ENCODE measurements at regions of chr12 and their contacts with region 1.

Region 1: GRCh38 chr12:12611512-12612306 is at the start of gene CREBL2:
- DNase-seq: peak; percentile 88 to 89 (median 88)
- H3K4me3 ChIP-seq: peak within 1 kb of the TSS; percentile 92 to 97
- H3K4me3 Mint-ChIP-seq: peak within 1 kb of the TSS; percentile 92 to 99 (median 95)
- H3K27ac ChIP-seq: peak within 1 kb of the TSS; percentile 77
- H3K27ac Mint-ChIP-seq: peak within 1 kb of the TSS; percentile 93 to 99 (median 99)
- H3K4me1 ChIP-seq: peaks cover 66% of the 10 kb centered on the region
- H3K4me1 Mint-ChIP-seq: peaks cover 34 to 73% (median 54%) of the 10 kb centered on the region in 4 donors
- H3K27me3 ChIP-seq: no peaks in the 10 kb centered on the region
- H3K27me3 Mint-ChIP-seq: no peaks in the 10 kb centered on the region
- total RNA-seq, gene CREBL2: 51.0 to 52.0 TPM

Region 2: GRCh38 chr12:12630850-12631249 is 19.1 kb after region 1 on chr12:
- CTCF ChIA-PET with region 1: interaction called, 7 read pairs
- POLR2A ChIA-PET with region 1: interaction called, 16 read pairs
- intact Hi-C with region 1: no loop called
- DNase-seq: no peak
- H3K4me3 ChIP-seq: no peak overlapping the region
- H3K4me3 Mint-ChIP-seq: peak overlapping the region in 7 of 8 donors; percentile 29 to 75 (median 55)
- H3K27ac ChIP-seq: no peak overlapping the region
- H3K27ac Mint-ChIP-seq: peak overlapping the region in 6 of 7 donors; percentile 7 to 86 (median 52)
- H3K4me1 ChIP-seq: peaks cover 56% of the 10 kb centered on the region
- H3K4me1 Mint-ChIP-seq: peaks cover 43 to 72% (median 61%) of the 10 kb centered on the region in 4 donors
- H3K27me3 ChIP-seq: no peaks in the 10 kb centered on the region
- H3K27me3 Mint-ChIP-seq: no peaks in the 10 kb centered on the region

Region 3: DNA sequence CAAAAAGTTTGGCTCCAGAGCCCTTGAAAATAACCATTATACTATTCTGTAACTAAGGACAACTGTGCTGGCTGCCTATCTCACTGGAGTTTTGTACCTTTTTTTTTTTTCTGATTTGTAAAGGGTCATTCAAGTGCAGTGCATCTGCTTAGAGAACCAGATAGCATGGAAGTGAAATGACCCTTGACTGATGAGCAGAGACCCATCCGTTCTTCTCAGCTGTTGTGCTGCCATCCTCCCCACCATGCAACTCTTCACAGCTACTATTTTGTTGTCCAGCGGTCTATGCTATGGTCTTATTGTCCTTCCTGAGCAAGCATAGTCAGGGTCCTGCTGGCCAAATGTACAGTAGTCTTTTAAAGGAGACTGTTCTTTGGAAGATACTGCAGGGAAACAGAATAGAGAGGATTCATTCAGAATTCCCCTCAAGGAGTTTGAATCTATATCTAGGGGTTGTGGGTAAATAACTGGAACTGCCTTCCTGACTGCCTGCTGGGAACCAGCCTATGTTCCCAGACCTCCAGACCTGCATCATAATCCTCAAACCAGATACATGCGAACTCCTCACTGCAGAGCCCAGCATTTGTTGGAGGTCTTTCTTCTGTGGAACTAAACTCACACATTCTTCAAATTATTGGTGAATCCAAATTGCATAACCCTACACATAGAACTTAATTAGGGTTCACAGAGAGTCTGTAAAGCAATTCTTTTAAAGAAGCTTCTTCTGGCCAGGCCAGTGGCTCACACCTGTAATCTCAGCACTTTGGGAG is 43.2 kb after region 1 on chr12:
- CTCF ChIA-PET with region 1: interaction called, 10 read pairs
- POLR2A ChIA-PET with region 1: interaction called, 6 read pairs
- intact Hi-C with region 1: loop called (anchors 1 kb)
- DNase-seq: no peak
- H3K4me3 ChIP-seq: no peak overlapping the region
- H3K4me3 Mint-ChIP-seq: no peak overlapping the region
- H3K27ac ChIP-seq: no peak overlapping the region
- H3K27ac Mint-ChIP-seq: peak overlapping the region in 2 of 7 donors; percentile 70 to 79
- H3K4me1 ChIP-seq: peaks cover 13% of the 10 kb centered on the region
- H3K4me1 Mint-ChIP-seq: peaks cover 13 to 19% (median 14%) of the 10 kb centered on the region in 4 donors
- H3K27me3 ChIP-seq: no peaks in the 10 kb centered on the region
- H3K27me3 Mint-ChIP-seq: no peaks in the 10 kb centered on the region

Region 4: DNA sequence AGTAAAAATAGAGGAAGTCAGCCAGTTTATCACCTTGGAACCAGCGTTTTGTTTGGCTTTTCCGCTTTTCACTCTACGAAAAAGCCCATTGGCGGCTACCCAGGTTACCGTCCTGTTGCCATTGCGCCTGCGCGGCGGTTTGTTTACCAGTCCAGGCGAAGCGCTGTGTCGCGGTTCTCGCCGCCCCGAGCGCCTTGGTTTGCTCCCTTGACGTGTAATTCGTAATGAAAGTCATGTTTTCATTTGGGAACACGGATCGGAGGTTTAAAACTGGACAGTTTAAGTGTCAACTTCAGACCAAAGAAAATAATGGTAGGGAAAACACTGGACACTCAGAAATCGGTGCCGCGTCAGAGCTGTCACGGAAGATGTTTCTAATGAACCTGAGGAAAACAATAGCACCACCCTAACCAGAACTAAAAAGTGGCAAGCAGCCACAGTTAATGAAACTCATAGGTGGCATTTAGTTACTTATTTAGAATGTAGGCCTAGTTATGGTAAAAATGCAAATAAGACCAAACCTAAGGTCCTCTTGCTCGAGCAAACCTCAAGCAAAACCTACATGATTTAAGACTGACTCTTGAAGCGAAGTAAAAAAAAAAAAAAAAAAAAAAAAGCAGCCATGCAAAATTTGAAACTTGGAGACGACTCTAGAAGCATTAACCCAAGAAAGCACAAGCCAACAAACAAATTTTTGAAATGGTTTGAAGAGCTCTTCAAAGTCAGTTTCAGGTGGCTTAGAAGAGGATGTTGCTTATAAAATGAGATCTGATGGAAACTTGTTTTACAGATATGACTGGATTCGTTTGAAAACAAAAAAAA is 85.1 kb after region 1 on chr12:
- CTCF ChIA-PET with region 1: interaction called, 3 read pairs
- POLR2A ChIA-PET with region 1: interaction called, 15 read pairs
- intact Hi-C with region 1: loop called (anchors 2 kb)
- DNase-seq: peak; percentile 93 to 96 (median 95)
- H3K4me3 ChIP-seq: peak overlapping the region; percentile 37 to 74
- H3K4me3 Mint-ChIP-seq: peak overlapping the region; percentile 86 to 97 (median 94)
- H3K27ac ChIP-seq: peak overlapping the region; percentile 87
- H3K27ac Mint-ChIP-seq: peak overlapping the region; percentile 98 to 100 (median 100)
- H3K4me1 ChIP-seq: peaks cover 24% of the 10 kb centered on the region
- H3K4me1 Mint-ChIP-seq: peaks cover 16 to 41% (median 30%) of the 10 kb centered on the region in 4 donors
- H3K27me3 ChIP-seq: no peaks in the 10 kb centered on the region
- H3K27me3 Mint-ChIP-seq: no peaks in the 10 kb centered on the region

Region 5: GRCh38 chr12:12724661-12725545 is 113.2 kb after region 1 on chr12:
- CTCF ChIA-PET with region 1: interaction called, 4 read pairs
- POLR2A ChIA-PET with region 1: interaction called, 49 read pairs
- intact Hi-C with region 1: no loop called
- DNase-seq: peak; percentile 93 to 97 (median 96)
- H3K4me3 ChIP-seq: peak overlapping the region in 1 of 2 donors; percentile 80
- H3K4me3 Mint-ChIP-seq: peak overlapping the region; percentile 89 to 96 (median 92)
- H3K27ac ChIP-seq: peak overlapping the region; percentile 95
- H3K27ac Mint-ChIP-seq: peak overlapping the region; percentile 95 to 99 (median 97)
- H3K4me1 ChIP-seq: peaks cover 56% of the 10 kb centered on the region
- H3K4me1 Mint-ChIP-seq: peaks cover 37 to 72% (median 43%) of the 10 kb centered on the region in 4 donors
- H3K27me3 ChIP-seq: no peaks in the 10 kb centered on the region
- H3K27me3 Mint-ChIP-seq: peaks cover 0 to 1% of the 10 kb centered on the region in 2 donors

Region 6: GRCh38 chr12:12934556-12934955 is 322.8 kb after region 1 on chr12:
- CTCF ChIA-PET with region 1: no interaction called
- POLR2A ChIA-PET with region 1: no interaction called
- intact Hi-C with region 1: no loop called
- DNase-seq: no peak
- H3K4me3 ChIP-seq: no peak overlapping the region
- H3K4me3 Mint-ChIP-seq: peak overlapping the region in 1 of 8 donors; percentile 36
- H3K27ac ChIP-seq: no peak overlapping the region
- H3K27ac Mint-ChIP-seq: no peak overlapping the region
- H3K4me1 ChIP-seq: no peaks in the 10 kb centered on the region
- H3K4me1 Mint-ChIP-seq: peaks cover 0 to 8% (median 0%) of the 10 kb centered on the region in 4 donors
- H3K27me3 ChIP-seq: no peaks in the 10 kb centered on the region
- H3K27me3 Mint-ChIP-seq: peaks cover 5 to 13% of the 10 kb centered on the region in 2 donors

Measured in CD4-positive, alpha-beta memory T cell (primary cell).